ENCODE measurements at regions of chr3 and their contacts with region 1.

Region 1: DNA sequence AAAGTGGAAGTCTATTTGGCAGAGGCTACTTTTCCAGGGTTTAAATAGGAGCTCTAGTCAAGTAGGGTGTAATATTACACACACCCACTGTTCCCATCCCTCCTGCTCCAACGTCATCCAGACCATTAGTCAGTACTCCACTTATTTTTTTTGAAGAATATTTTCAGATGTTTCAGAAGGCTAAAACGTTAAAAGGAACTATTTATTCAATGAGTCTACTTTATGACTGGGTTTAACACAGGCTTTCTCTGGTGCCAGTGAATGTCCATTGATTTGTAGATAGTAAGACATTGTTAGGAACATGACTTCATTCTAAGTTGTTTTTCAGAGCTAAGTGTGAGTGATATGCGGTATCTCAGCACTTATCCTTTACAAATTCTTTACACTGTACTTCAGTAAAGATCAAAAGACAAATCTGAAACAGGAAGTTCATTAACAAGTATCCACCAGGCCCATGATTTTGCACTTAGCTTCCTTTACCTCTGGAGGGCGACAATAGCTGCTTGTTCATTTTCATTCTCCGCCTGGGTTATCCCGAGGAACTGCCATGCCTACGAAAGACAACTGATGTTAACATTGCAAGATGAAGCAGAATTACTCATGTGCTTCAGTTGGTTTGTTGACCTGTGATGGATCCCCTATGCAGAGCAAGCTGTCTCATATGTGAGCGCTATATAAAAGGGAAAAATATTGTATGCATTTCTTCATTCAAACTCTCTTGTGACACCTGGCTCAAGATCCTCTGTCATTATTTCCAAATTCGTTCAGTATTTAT is 158.7 kb downstream of the USP13 start:
- DNase-seq: peak; percentile 40
- ATAC-seq: peak; percentile 94
- H3K4me3 ChIP-seq: no peak overlapping the region
- H3K27ac ChIP-seq: no peak overlapping the region
- H3K4me1 ChIP-seq: no peaks in the 10 kb centered on the region
- H3K27me3 ChIP-seq: no peaks in the 10 kb centered on the region
- CTCF ChIP-seq: peak; percentile 63 to 83 (median 78); a peak in 5 of 6 replicates
- EP300 ChIP-seq: no peak
- POLR2A ChIP-seq: no peak
- RAD21 ChIP-seq: peak; percentile 97

Region 2: GRCh38 chr3:179454887-179455286 is 356.6 kb before region 1 on chr3:
- CTCF ChIA-PET with region 1: no interaction called
- POLR2A ChIA-PET with region 1: no interaction called
- RAD21 ChIA-PET with region 1: no interaction called
- SMC1A ChIA-PET with region 1: no interaction called
- in situ Hi-C with region 1: no loop called
- intact Hi-C with region 1: no loop called
- DNase-seq: no peak
- ATAC-seq: no peak
- H3K4me3 ChIP-seq: no peak overlapping the region
- H3K27ac ChIP-seq: no peak overlapping the region
- H3K4me1 ChIP-seq: no peaks in the 10 kb centered on the region
- H3K27me3 ChIP-seq: peaks cover 0 to 10% of the 10 kb centered on the region in 2 experiments; a peak in 1 of 4 replicates
- CTCF ChIP-seq: no peak
- EP300 ChIP-seq: no peak
- POLR2A ChIP-seq: no peak
- RAD21 ChIP-seq: no peak

Region 3: DNA sequence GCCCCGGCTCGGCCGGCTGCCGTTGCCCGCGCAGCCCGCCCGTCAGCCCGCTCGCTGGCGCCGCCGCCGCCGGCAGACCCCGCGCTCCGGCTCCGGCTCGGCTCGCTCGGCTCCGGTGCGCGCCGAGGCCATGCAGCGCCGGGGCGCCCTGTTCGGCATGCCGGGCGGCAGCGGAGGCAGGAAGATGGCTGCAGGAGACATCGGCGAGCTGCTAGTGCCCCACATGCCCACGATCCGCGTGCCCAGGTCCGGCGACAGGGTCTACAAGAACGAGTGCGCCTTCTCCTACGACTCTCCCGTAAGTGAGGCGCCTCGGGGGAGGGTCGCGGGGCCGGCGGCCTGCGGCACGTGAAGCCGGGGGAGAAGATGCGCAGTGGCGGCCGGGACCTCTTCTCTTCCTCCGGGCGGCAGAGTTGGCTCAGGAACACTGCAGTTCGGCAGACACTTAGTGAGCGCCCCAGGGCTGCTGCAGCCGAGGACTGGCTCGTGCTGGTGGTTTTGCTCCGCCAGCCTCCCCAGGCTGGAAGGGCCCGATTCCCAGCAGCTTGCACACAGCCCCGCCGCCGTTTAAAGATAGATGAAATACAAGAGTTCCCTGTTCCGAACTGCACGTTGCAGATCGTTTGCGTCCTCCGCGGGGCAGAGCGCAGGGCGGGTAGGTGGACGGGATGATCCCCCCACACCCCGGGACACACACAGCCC is 158.3 kb before region 1 on chr3:
- CTCF ChIA-PET with region 1: interaction called, 11 read pairs
- POLR2A ChIA-PET with region 1: interaction called, 3 read pairs
- RAD21 ChIA-PET with region 1: no interaction called
- SMC1A ChIA-PET with region 1: interaction called, 4 read pairs
- in situ Hi-C with region 1: no loop called
- intact Hi-C with region 1: no loop called
- DNase-seq: no peak
- ATAC-seq: peak; percentile 69
- H3K4me3 ChIP-seq: peak overlapping the region; percentile 99
- H3K27ac ChIP-seq: peak overlapping the region; percentile 73
- H3K4me1 ChIP-seq: no peaks in the 10 kb centered on the region
- H3K27me3 ChIP-seq: no peaks in the 10 kb centered on the region
- CTCF ChIP-seq: peak in 2 of 3 experiments; percentile 8 to 36; a peak in 3 of 6 replicates
- EP300 ChIP-seq: no peak
- POLR2A ChIP-seq: peak; percentile 79
- RAD21 ChIP-seq: no peak; the same call in 1 of the 2 replicates

Region 4: GRCh38 chr3:179825519-179826246 is 14.2 kb after region 1 on chr3:
- CTCF ChIA-PET with region 1: interaction called, 11 read pairs
- POLR2A ChIA-PET with region 1: no interaction called
- RAD21 ChIA-PET with region 1: interaction called, 5 read pairs
- SMC1A ChIA-PET with region 1: interaction called, 14 read pairs
- in situ Hi-C with region 1: no loop called
- intact Hi-C with region 1: no loop called
- DNase-seq: no peak
- ATAC-seq: no peak
- H3K4me3 ChIP-seq: no peak overlapping the region
- H3K27ac ChIP-seq: no peak overlapping the region
- H3K4me1 ChIP-seq: no peaks in the 10 kb centered on the region
- H3K27me3 ChIP-seq: no peaks in the 10 kb centered on the region
- CTCF ChIP-seq: no peak
- EP300 ChIP-seq: no peak
- POLR2A ChIP-seq: no peak
- RAD21 ChIP-seq: no peak

Region 5: GRCh38 chr3:179882292-179882691 is 70.8 kb after region 1 on chr3:
- CTCF ChIA-PET with region 1: interaction called, 34 read pairs
- POLR2A ChIA-PET with region 1: no interaction called
- RAD21 ChIA-PET with region 1: interaction called, 29 read pairs
- SMC1A ChIA-PET with region 1: interaction called, 21 read pairs
- in situ Hi-C with region 1: no loop called
- intact Hi-C with region 1: loop called (anchors 2 kb)
- DNase-seq: peak; percentile 61
- ATAC-seq: peak; percentile 94
- H3K4me3 ChIP-seq: no peak overlapping the region
- H3K27ac ChIP-seq: peak overlapping the region; percentile 58; the same call in 1 of the 2 replicates
- H3K4me1 ChIP-seq: peaks cover 21% of the 10 kb centered on the region
- H3K27me3 ChIP-seq: no peaks in the 10 kb centered on the region
- CTCF ChIP-seq: no peak
- EP300 ChIP-seq: no peak
- POLR2A ChIP-seq: no peak
- RAD21 ChIP-seq: no peak

Region 6: GRCh38 chr3:180002006-180002405 is 190.5 kb after region 1 on chr3:
- CTCF ChIA-PET with region 1: no interaction called
- POLR2A ChIA-PET with region 1: no interaction called
- RAD21 ChIA-PET with region 1: no interaction called
- SMC1A ChIA-PET with region 1: no interaction called
- in situ Hi-C with region 1: no loop called
- intact Hi-C with region 1: no loop called
- DNase-seq: no peak
- ATAC-seq: no peak
- H3K4me3 ChIP-seq: no peak overlapping the region
- H3K27ac ChIP-seq: no peak overlapping the region
- H3K4me1 ChIP-seq: no peaks in the 10 kb centered on the region
- H3K27me3 ChIP-seq: no peaks in the 10 kb centered on the region
- CTCF ChIP-seq: no peak
- EP300 ChIP-seq: no peak
- POLR2A ChIP-seq: no peak
- RAD21 ChIP-seq: no peak

Region 7: GRCh38 chr3:180018543-180018942 is 207.0 kb after region 1 on chr3:
- CTCF ChIA-PET with region 1: interaction called, 19 read pairs
- POLR2A ChIA-PET with region 1: no interaction called
- RAD21 ChIA-PET with region 1: interaction called, 10 read pairs
- SMC1A ChIA-PET with region 1: interaction called, 7 read pairs
- in situ Hi-C with region 1: no loop called
- intact Hi-C with region 1: loop called (anchors 2 kb)
- DNase-seq: no peak
- ATAC-seq: peak; percentile 85
- H3K4me3 ChIP-seq: no peak overlapping the region
- H3K27ac ChIP-seq: no peak overlapping the region
- H3K4me1 ChIP-seq: no peaks in the 10 kb centered on the region
- H3K27me3 ChIP-seq: no peaks in the 10 kb centered on the region
- CTCF ChIP-seq: peak; percentile 8 to 50 (median 35); a peak in 3 of 6 replicates
- EP300 ChIP-seq: no peak
- POLR2A ChIP-seq: no peak
- RAD21 ChIP-seq: peak; percentile 65

Region 8: GRCh38 chr3:180594631-180595558 is 783.4 kb after region 1 on chr3:
- CTCF ChIA-PET with region 1: interaction called, 43 read pairs
- POLR2A ChIA-PET with region 1: no interaction called
- RAD21 ChIA-PET with region 1: interaction called, 34 read pairs
- SMC1A ChIA-PET with region 1: interaction called, 19 read pairs
- in situ Hi-C with region 1: loop called (anchors 5 kb)
- intact Hi-C with region 1: loop called (anchors 1 kb)
- DNase-seq: peak; percentile 26
- ATAC-seq: peak; percentile 88
- H3K4me3 ChIP-seq: no peak overlapping the region
- H3K27ac ChIP-seq: no peak overlapping the region
- H3K4me1 ChIP-seq: no peaks in the 10 kb centered on the region
- H3K27me3 ChIP-seq: no peaks in the 10 kb centered on the region
- CTCF ChIP-seq: peak; percentile 38 to 72 (median 52); a peak in 5 of 6 replicates
- EP300 ChIP-seq: no peak
- POLR2A ChIP-seq: no peak
- RAD21 ChIP-seq: peak; percentile 91

Region 9: DNA sequence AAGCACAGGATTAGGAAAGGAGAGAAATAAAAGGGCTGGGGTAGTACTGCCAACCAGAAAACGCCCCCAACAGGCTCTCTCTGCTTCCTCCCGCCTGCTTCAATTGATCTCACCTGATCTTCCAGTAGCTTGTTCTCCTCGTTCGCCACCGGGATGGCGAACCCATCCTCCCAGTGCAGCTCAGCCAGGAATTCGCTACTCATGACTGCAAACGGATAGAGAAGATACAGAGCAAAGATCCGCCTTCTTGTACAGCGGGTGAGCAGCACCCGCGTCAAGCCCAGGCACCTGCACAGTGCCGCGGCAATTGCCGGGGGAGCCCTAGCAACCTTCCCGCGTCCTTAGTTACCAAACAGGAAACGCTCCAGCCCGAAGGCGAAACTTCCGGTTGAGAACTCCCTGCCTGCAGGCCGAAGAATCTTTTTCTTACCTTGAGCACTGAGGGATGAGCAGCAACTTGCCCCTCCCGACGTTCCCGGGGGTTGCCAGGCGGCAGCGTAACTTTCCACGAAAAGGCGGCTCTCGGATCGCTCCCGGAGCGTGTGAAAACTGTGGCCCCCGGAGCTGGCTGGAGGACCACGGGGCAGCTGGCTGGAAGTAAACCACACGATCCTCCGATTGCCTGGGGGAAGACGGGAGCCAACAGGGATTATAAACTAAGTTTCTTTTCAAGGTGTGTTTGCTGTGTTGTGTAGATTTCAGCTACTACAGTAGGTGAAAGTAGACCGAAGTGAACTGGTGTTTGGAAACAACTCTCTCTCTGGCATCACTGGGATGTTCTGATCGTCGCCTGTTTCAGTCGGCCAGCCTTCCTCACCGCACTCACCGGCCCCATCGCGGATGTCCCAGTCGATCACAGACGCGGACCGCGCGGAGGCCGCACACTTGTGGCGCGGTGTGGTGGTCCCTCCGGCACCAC is 867.9 kb after region 1 on chr3 and contains the start of gene CCDC39:
- CTCF ChIA-PET with region 1: interaction called, 10 read pairs
- POLR2A ChIA-PET with region 1: no interaction called
- RAD21 ChIA-PET with region 1: interaction called, 7 read pairs
- SMC1A ChIA-PET with region 1: interaction called, 5 read pairs
- in situ Hi-C with region 1: no loop called
- intact Hi-C with region 1: no loop called
- DNase-seq: peak; percentile 30
- ATAC-seq: peak; percentile 96
- H3K4me3 ChIP-seq: peak within 1 kb of the TSS; percentile 82
- H3K27ac ChIP-seq: no peak within 1 kb of the TSS
- H3K4me1 ChIP-seq: peaks cover 4% of the 10 kb centered on the region; the same call in 1 of the 2 replicates
- H3K27me3 ChIP-seq: no peaks in the 10 kb centered on the region
- CTCF ChIP-seq: no peak
- EP300 ChIP-seq: no peak
- POLR2A ChIP-seq: no peak
- RAD21 ChIP-seq: no peak
- polyA plus RNA-seq, gene CCDC39: 0.32 to 0.38 TPM